ENCODE measurements at regions of chr1 and their contacts with region 1.

Region 1: DNA sequence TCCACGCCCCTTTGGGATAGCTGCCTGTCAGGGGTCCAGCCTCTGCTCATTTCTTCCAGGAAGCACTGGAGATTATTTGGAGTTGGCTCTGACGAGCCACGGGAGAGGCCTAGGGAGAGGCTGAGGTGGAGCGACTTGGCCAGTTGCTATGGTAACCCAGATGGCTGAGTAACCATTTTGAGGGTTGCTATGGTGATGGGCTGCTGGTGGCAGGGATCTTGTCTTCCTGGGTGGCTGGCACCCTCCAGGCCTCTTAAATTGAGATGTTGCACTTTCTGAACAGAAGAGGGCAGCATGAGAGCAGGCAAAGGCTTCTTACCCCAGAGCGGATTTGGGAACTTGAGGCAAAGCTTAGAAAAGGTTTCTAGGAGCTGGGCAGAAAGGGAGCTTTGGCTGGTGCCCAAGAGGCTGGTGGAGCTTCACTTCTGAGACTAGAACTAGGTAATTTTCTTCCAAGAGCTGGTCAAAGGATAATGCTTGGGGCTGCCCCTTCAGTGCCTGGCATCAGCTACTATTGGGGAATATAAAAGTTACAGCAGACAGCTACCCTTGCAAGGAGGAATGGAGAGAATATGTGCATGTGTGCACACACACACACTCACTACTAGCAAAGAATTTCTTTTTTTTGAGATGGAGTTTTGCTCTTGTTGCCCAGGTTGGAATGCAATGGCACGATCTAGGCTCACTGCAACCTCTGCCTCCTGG is 72.5 kb downstream of the NDUFS5 start:
- DNase-seq: peak; percentile 76 to 94
- H3K4me3 ChIP-seq: no peak overlapping the region
- H3K27ac ChIP-seq: no peak overlapping the region
- H3K4me1 ChIP-seq: peaks cover 27% of the 10 kb centered on the region
- H3K27me3 ChIP-seq: no peaks in the 10 kb centered on the region
- CTCF ChIP-seq: peak; percentile 89

Region 2: DNA sequence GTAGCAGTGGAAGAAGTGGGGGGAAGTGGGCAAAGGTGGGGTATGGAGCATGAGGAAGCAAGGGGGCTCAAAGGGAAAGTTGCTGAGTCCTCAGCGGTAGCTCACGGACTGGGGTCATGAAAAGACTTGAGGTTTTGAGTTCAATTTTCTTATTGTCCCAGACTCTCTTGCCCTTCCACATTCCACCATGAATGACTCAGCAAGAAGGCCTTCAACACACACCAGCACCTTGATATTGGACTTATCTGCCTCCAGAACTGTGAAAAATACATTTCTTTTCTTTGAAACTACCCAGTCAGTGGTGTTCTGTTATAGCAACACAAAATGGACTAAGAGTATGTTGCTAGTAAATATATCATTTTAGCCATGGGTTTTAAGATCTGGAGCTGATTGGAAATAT is 139.7 kb before region 1 on chr1:
- CTCF ChIA-PET with region 1: no interaction called
- POLR2A ChIA-PET with region 1: no interaction called
- intact Hi-C with region 1: loop called (anchors 1 kb)
- DNase-seq: peak; percentile 71 to 92
- H3K4me3 ChIP-seq: peak overlapping the region; percentile 23; the same call in 1 of the 2 replicates
- H3K27ac ChIP-seq: peak overlapping the region; percentile 95
- H3K4me1 ChIP-seq: peaks cover 55% of the 10 kb centered on the region
- H3K27me3 ChIP-seq: no peaks in the 10 kb centered on the region
- CTCF ChIP-seq: no peak

Region 3: DNA sequence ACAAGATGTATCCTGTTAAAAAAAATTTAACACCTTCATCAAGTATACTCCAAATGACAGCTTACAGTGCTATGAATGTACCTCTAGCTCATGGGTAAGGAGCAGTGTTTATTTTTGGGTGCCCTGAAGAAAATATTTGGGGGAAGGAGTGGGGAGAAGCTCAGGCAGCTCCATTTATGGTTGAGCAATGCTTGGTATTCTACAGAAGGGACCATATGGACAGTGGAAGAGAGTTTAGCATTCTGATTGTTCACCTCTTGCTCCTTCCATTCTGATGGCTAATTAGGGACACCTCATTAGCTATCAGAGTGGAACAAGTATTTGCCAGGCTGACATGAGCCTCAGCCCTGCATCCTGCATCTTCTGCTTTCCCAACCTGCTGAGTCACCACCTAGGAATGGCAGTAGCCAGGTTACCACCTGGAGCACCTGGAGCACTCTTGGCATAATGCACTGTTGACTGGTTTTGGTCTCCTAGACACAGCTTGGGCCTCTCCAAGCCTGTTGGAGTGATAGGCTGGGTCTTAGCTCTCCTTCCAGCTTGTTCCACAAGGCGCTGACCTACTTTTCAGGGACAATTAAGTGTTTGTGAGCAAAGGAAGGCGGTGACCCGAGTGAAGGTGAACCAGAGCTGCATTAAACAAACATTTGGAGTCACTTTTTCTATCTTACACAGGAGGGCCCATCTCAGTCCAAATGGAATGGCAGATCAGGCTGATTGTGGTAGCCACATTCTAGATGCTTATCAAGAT is 43.9 kb after region 1 on chr1:
- CTCF ChIA-PET with region 1: interaction called, 3 read pairs
- POLR2A ChIA-PET with region 1: no interaction called
- intact Hi-C with region 1: loop called (anchors 1 kb)
- DNase-seq: peak; percentile 91 to 96
- H3K4me3 ChIP-seq: no peak overlapping the region
- H3K27ac ChIP-seq: peak overlapping the region; percentile 43
- H3K4me1 ChIP-seq: peaks cover 26% of the 10 kb centered on the region
- H3K27me3 ChIP-seq: no peaks in the 10 kb centered on the region
- CTCF ChIP-seq: no peak

Region 4: GRCh38 chr1:39196244-39197215 is 97.8 kb after region 1 on chr1:
- CTCF ChIA-PET with region 1: interaction called, 35 read pairs
- POLR2A ChIA-PET with region 1: interaction called, 4 read pairs
- intact Hi-C with region 1: loop called (anchors 1 kb)
- DNase-seq: no peak
- H3K4me3 ChIP-seq: no peak overlapping the region
- H3K27ac ChIP-seq: 0 out of 2 replicates have a peak overlapping the region, but pooled peaks have one; percentile 29
- H3K4me1 ChIP-seq: peaks cover 47% of the 10 kb centered on the region
- H3K27me3 ChIP-seq: no peaks in the 10 kb centered on the region
- CTCF ChIP-seq: no peak

Region 5: GRCh38 chr1:39391691-39392679 is 293.3 kb after region 1 on chr1:
- CTCF ChIA-PET with region 1: interaction called, 8 read pairs
- POLR2A ChIA-PET with region 1: no interaction called
- intact Hi-C with region 1: loop called (anchors 1 kb)
- DNase-seq: peak; percentile 31 to 72
- H3K4me3 ChIP-seq: peak overlapping the region; percentile 25
- H3K27ac ChIP-seq: peak overlapping the region; percentile 79
- H3K4me1 ChIP-seq: peaks cover 74% of the 10 kb centered on the region
- H3K27me3 ChIP-seq: no peaks in the 10 kb centered on the region
- CTCF ChIP-seq: no peak

Region 6: GRCh38 chr1:39653546-39654031 is 554.9 kb after region 1 on chr1:
- CTCF ChIA-PET with region 1: interaction called, 3 read pairs
- POLR2A ChIA-PET with region 1: no interaction called
- intact Hi-C with region 1: loop called (anchors 1 kb)
- DNase-seq: peak in 1 of 2 experiments; percentile 74
- H3K4me3 ChIP-seq: no peak overlapping the region
- H3K27ac ChIP-seq: no peak overlapping the region
- H3K4me1 ChIP-seq: no peaks in the 10 kb centered on the region
- H3K27me3 ChIP-seq: no peaks in the 10 kb centered on the region
- CTCF ChIP-seq: peak; percentile 92

Measured in PC-9 (cell line).